OCI-LY7 (cell line): ENCODE measurements at regions of chr11 and their contacts with region 1.

Region 1: DNA sequence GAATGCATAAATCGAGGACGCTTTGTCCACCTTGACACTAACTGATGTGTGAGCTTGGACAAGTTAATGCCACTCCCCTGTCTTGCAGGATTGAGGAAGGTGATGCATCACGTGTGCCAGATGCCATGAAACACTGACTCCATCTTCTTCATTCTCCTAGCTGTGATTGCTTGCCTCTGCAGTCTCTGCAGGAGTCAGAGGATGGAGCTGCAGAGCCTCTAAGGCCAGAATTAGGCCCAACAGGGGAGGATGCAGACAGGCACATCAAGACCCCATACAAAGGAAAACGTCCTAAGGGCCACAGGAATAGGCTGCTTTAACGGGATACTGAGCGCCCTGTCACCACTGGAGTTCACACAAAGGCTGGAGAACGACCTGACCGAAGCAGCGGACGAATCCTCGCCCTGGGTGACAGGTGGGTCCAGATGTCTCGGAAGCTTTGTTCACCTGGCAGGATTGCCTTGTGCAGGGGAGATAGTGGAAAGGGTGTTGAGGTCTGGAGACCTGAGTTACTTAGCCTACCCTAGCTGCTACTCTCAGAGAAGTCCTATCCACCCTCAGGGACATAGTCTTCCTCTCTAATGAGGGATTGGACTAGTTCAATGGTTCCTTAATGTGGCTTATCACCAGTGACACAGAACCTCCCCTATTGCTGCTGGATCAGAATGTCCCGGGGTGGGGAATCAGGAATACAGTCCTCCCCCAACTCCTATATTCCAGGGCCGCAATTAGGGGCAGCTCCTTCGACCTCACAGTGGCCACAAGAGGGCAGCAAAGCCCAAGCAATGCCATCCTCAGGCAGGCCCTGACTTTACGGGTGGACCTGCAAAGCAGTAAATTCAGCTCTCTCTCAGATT is 32.4 kb downstream of the DBX1 start:
- DNase-seq: peak; percentile 62
- H3K4me3 ChIP-seq: no peak overlapping the region
- H3K27ac ChIP-seq: no peak overlapping the region
- H3K4me1 ChIP-seq: no peaks in the 10 kb centered on the region
- CTCF ChIP-seq: peak; percentile 88

Region 2: DNA sequence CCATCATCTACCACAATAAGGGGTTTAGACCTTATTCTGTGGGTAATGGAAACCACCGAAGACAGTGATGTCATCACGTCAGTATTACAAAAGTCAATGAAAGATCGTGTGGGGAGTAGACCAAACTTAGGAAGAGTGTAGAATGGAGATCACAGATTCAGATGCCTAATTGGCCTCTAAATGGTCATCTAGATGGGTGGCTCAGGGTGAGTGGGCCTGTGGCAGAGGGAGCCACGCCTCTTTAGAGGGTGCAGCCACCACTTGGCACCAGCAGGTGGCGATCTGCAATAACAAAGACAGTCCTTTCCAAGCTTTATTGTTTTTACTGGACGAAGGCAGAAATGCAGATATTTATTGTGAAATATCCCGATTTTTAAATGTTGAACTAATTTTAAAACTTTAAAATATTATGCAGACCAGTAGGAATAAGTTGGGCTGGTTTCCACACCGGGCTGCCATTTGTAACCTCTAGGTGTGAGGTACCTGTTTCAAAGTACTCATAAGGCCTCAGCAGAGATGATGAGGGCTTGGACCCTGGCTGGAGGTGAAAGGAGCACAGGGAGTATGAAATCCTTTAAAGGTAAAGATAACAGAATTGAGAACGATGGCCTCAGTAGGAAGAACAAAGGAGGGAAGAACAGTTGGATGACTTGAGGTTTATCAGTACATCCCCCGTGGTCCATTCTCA is 189.6 kb before region 1 on chr11:
- CTCF ChIA-PET with region 1: no interaction called
- POLR2A ChIA-PET with region 1: no interaction called
- intact Hi-C with region 1: loop called (anchors 1 kb)
- DNase-seq: peak; percentile 42
- H3K4me3 ChIP-seq: no peak overlapping the region
- H3K27ac ChIP-seq: no peak overlapping the region
- H3K4me1 ChIP-seq: no peaks in the 10 kb centered on the region
- CTCF ChIP-seq: peak; percentile 91

Region 3: DNA sequence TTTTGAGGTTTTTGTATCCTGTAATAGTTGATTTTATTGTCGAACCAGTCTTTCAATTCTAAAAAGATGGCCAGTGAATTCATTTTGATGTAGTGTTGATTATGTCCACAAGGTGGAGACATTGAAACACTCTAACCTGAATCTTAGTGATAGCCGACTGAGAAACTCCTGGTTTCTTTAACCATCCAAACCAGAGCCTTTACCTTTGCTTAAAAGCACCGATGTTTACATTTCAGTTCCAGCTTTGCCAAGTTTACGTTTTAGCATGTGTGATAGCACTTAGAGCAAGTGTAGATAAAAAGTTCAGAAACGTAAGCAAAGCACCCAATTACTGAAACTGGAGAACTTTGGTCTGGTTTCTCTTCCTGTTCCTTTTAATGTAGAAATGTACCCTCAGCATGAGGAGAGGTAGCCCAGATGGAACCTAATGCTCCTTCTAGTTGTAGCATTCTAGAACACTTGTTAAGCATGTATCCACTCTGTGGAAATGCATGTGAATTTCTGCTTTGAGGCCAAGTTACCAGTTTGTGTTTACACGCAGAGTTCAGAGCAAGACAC is 176.3 kb before region 1 on chr11:
- CTCF ChIA-PET with region 1: no interaction called
- POLR2A ChIA-PET with region 1: no interaction called
- intact Hi-C with region 1: loop called (anchors 5 kb)
- DNase-seq: peak; percentile 58
- H3K4me3 ChIP-seq: peak overlapping the region; percentile 43
- H3K27ac ChIP-seq: no peak overlapping the region
- H3K4me1 ChIP-seq: no peaks in the 10 kb centered on the region
- CTCF ChIP-seq: peak; percentile 88

Region 4: DNA sequence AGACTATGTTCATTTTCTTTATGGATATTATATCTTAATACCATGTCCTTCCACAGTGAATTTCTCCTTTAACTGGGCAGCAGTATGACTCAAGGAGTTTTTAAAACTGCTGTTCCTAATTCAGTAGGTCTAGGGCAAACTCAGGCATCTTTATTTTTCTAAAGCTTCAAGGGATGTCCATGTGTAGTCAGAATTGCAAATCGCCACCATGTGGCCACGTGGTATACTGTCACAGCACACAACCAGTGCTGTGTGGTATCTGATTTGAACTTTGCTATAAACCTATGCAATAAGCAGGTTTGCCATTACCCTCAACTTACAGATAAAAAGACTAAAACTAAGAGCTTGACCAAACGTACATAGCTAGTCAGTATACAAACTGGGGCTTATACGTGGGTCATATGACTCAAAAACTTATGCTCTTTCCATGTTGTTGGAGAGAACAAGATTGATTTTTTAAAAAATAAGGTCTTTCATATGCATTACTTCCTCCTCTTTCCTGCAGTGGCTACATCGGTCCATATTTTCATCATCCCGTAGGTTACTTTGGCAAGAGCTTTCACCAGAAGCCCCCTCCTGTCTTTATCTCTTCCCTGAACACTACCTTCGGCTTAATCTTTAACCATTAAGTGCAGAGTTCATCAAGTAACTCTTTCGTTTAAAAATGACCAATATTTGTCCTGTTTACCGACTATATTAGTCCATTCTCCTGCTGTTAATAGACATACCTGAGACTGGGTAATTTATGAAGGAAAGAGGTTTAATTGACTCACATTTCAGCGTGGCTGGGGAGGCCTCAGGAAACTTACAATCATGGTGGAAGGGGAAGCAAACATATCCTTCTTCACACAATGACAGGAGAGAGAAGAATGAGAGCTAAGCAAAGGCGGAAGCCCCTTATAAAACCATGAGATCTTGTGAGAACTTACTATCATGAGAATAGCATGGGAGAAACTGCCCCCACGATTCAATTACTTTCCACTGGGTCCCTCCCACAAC is 227.6 kb after region 1 on chr11:
- CTCF ChIA-PET with region 1: no interaction called
- POLR2A ChIA-PET with region 1: no interaction called
- intact Hi-C with region 1: loop called (anchors 1 kb)
- DNase-seq: peak; percentile 35
- H3K4me3 ChIP-seq: no peak overlapping the region
- H3K27ac ChIP-seq: no peak overlapping the region
- H3K4me1 ChIP-seq: no peaks in the 10 kb centered on the region
- CTCF ChIP-seq: peak; percentile 74

Region 5: DNA sequence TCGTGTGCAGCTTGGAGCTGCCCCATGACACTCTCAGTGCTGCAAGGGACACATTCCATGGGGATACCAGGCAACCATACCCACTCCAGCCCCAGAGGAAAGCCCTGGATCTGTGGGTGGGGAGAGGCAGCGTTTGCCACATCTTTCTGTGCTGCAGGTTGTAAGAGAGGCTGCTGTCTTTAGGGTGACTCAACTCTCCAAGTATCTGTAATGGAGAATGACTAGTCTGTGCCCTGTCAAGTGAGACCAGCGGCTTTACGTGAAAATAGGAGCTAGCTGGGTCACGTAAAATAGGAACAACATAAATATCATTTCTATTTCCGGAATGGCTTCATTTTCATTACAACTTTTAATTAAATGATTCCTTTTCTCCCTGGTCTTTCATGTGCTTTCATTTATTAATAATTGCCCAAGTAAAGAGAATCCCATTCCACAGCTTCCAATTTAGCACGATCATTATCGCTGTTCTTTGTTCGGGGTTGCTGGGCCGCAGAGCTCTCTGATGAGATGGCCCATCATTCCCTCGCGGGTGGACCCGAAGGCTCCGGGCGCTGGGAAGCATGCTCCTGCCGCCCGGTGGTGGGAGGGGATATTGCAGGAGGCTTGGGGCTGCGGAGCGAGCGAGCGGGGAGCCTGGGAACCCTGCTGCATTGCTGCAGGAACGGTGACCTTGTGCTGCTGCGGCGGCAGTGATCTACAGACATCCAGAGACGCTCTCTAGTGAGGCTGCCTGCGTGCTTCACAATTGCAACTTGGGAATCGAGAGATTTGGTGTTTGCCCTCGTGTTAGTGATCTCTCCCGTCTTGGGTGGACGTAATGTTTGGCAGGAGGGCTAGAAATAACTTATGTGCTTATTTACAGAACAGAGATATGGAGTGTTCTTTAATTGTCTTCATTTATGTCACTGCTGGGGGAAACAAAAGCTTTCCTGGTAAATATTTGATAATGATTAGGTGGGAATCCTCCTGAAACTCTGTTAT is 482.1 kb after region 1 on chr11:
- CTCF ChIA-PET with region 1: no interaction called
- POLR2A ChIA-PET with region 1: no interaction called
- intact Hi-C with region 1: loop called (anchors 2 kb)
- DNase-seq: peak; percentile 44
- H3K4me3 ChIP-seq: no peak overlapping the region
- H3K27ac ChIP-seq: no peak overlapping the region
- H3K4me1 ChIP-seq: no peaks in the 10 kb centered on the region
- CTCF ChIP-seq: peak; percentile 77